Gastrocnemius medialis (tissue), 4 donors: ENCODE measurements at regions of chr6 and their contacts with region 1.

Region 1: GRCh38 chr6:5840509-5841390 is 166.0 kb downstream of the NRN1 start:
- DNase-seq: no peak
- ATAC-seq: no peak
- H3K4me3 ChIP-seq: no peak overlapping the region
- H3K27ac ChIP-seq: no peak overlapping the region
- H3K4me1 ChIP-seq: peaks cover 0 to 13% of the 10 kb centered on the region in 2 donors
- H3K27me3 ChIP-seq: no peaks in the 10 kb centered on the region
- CTCF ChIP-seq: no peak
- POLR2A ChIP-seq: no peak

Region 2: DNA sequence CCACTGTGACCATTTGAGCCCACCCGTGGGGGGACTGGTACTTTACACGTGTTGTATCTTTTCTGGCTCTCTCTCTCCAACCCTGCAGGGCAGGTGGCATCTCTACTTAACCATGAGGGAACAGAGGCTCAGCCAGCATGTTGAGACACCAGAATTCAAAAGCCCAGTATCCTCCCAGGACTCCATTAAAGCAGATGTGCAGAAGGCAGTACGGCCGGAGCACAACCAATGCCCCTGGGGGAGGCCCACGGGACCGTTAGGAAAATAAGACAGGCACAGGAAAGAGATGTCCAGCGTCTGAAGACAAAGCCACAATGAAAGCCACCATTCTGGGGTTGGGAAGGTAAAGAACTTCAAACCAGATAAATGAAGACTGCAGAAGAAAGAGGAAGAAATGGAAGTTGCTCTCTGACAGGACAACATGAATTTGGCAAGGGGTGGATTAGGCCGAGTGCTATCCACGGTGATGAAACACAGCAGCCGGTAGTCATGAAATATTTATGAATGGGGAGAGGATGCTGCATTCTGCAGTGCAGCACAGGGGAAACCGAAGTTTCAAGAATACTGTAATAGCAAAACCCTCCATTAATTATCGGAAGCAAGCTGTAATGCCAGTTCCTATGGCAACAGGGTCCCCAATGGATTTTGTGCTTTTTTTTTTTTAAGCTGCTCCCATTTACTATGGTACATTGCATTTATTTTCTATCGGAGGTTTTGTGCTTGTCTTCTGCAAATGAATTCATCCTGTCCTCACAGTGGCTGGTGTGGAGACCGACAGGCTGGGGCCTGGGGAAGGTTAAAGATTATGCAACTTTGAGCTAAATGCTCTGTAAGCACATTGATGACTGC is 13.5 kb before region 1 on chr6:
- in situ Hi-C with region 1: no loop called
- intact Hi-C with region 1: loop called (anchors 1 kb)
- DNase-seq: no peak
- ATAC-seq: no peak
- H3K4me3 ChIP-seq: no peak overlapping the region
- H3K27ac ChIP-seq: no peak overlapping the region
- H3K4me1 ChIP-seq: no peaks in the 10 kb centered on the region
- H3K27me3 ChIP-seq: no peaks in the 10 kb centered on the region
- CTCF ChIP-seq: no peak
- POLR2A ChIP-seq: no peak